Mammary epithelial cell (primary cell): ENCODE measurements at regions of chr2 and their contacts with region 1.

Region 1: DNA sequence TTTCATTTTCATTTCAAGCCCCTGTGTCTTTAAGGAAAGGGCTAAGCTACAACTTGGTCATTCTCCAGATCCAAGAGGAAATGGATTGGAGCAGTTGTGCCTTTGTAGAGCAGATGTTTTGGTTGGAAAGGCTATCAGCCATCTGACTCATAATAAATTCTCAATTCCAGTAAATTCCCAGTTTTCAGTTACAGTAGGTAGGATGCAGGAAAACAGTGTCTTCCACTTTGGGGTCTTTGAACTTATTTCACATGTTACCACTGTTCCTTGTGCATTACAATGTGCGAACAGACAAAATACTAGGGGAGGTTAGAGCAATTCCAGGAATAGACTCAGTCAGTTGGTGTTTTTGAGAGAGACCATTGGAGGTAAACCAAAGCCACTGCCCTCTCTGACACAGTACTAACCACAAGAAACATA is 211.9 kb downstream of the BABAM2 start:
- DNase-seq: peak; percentile 13
- H3K4me3 ChIP-seq: no peak overlapping the region
- H3K27ac ChIP-seq: no peak overlapping the region
- H3K4me1 ChIP-seq: peaks cover 17% of the 10 kb centered on the region
- H3K27me3 ChIP-seq: no peaks in the 10 kb centered on the region
- CTCF ChIP-seq: no peak

Region 2: DNA sequence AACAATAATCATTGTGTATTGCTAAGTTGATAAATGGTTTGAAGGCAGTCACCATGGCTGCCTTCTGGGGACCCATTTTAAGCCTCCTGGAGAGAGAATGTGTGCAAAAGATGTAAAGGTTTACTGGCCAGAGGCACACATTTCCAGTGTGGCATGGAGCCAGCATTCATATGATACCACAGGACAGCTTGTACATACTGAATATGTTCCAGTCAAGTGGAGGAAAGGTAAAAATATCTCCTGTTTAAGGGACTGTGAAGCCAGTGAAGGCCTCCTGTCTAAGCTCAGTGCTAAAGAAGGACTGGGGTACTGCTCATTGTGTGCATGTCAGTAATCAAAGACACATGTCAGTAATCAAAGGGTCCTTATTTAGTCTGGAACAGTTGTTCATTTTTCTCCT is 92.7 kb before region 1 on chr2:
- CTCF ChIA-PET with region 1: interaction called, 10 read pairs
- dilution Hi-C with region 1: no loop called
- in situ Hi-C with region 1: no loop called
- intact Hi-C with region 1: no loop called
- DNase-seq: no peak
- H3K4me3 ChIP-seq: no peak overlapping the region
- H3K27ac ChIP-seq: no peak overlapping the region
- H3K4me1 ChIP-seq: no peaks in the 10 kb centered on the region
- H3K27me3 ChIP-seq: no peaks in the 10 kb centered on the region
- CTCF ChIP-seq: no peak

Region 3: DNA sequence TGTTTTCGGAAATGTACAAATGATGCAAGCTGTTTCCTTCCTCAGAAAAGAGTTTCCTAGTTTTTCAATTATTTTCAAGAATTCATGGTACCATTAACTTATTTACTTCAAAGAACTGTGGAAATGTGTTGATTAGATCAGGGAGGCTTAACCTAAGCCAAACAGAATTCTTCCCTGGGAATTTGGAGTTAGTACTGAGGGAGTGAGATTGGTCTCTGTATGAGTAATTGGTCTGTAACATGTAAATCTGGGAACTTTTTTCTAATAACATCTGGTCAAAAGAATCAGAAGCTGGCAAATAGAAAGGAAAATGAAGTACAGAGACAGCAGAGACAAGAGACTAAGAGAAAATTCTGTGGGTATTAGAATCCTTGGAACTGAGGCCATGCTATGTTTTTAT is 66.2 kb before region 1 on chr2:
- CTCF ChIA-PET with region 1: interaction called, 10 read pairs
- dilution Hi-C with region 1: no loop called
- in situ Hi-C with region 1: no loop called
- intact Hi-C with region 1: no loop called
- DNase-seq: no peak
- H3K4me3 ChIP-seq: no peak overlapping the region
- H3K27ac ChIP-seq: no peak overlapping the region
- H3K4me1 ChIP-seq: no peaks in the 10 kb centered on the region
- H3K27me3 ChIP-seq: no peaks in the 10 kb centered on the region
- CTCF ChIP-seq: no peak

Region 4: GRCh38 chr2:28206762-28207161 is 104.3 kb after region 1 on chr2:
- CTCF ChIA-PET with region 1: interaction called, 12 read pairs
- dilution Hi-C with region 1: no loop called
- in situ Hi-C with region 1: no loop called
- intact Hi-C with region 1: no loop called
- DNase-seq: no peak
- H3K4me3 ChIP-seq: no peak overlapping the region
- H3K27ac ChIP-seq: no peak overlapping the region
- H3K4me1 ChIP-seq: no peaks in the 10 kb centered on the region
- H3K27me3 ChIP-seq: no peaks in the 10 kb centered on the region
- CTCF ChIP-seq: no peak

Region 5: DNA sequence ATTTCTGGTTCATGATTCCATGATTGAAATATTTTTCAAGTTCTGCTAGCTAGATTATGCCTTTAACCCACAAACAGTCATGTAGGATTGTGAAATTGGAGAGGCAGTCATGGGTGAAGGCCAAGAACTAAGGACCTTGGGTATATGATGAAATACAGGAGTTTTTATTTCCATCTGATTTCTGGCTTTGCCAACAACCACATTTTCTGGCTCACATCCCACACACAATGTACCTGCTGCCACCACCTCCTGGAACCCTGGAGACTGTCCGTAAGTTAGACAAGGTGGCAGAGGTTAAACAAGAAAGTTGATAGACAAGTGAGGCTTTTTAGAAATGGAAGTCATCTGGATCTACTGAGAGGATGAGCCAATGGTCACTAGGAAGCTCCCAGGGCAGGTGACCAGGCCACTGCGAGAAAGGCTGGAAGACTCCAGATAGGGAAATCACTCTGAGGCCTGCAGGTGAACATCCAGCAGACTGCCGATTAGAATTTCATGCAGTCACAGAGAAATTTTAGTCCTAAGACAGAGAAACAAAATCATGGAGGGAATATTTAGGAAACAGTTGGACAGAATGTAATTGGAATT is 1417.0 kb after region 1 on chr2:
- CTCF ChIA-PET with region 1: no interaction called
- dilution Hi-C with region 1: no loop called
- in situ Hi-C with region 1: no loop called
- intact Hi-C with region 1: no loop called
- DNase-seq: peak; percentile 58
- H3K4me3 ChIP-seq: no peak overlapping the region
- H3K27ac ChIP-seq: no peak overlapping the region
- H3K4me1 ChIP-seq: peaks cover 4% of the 10 kb centered on the region
- H3K27me3 ChIP-seq: no peaks in the 10 kb centered on the region
- CTCF ChIP-seq: no peak